ENCODE measurements at regions of chr2 and their contacts with region 1.

Region 1: GRCh38 chr2:159879051-159879604 is 81.1 kb upstream of the CD302 start:
- DNase-seq: no peak
- H3K4me3 ChIP-seq: no peak overlapping the region
- H3K27ac ChIP-seq: no peak overlapping the region
- H3K4me1 ChIP-seq: no peaks in the 10 kb centered on the region
- CTCF ChIP-seq: no peak

Region 2: GRCh38 chr2:159807183-159808031 is 71.7 kb before region 1 on chr2:
- CTCF ChIA-PET with region 1: no interaction called
- POLR2A ChIA-PET with region 1: no interaction called
- intact Hi-C with region 1: no loop called
- DNase-seq: peak; percentile 47
- H3K4me3 ChIP-seq: no peak overlapping the region
- H3K27ac ChIP-seq: no peak overlapping the region
- H3K4me1 ChIP-seq: no peaks in the 10 kb centered on the region
- CTCF ChIP-seq: peak; percentile 89

Region 3: GRCh38 chr2:160028431-160029269 is 149.5 kb after region 1 on chr2:
- CTCF ChIA-PET with region 1: no interaction called
- POLR2A ChIA-PET with region 1: interaction called, 12 read pairs
- intact Hi-C with region 1: no loop called
- DNase-seq: no peak
- H3K4me3 ChIP-seq: no peak overlapping the region
- H3K27ac ChIP-seq: no peak overlapping the region
- H3K4me1 ChIP-seq: no peaks in the 10 kb centered on the region
- CTCF ChIP-seq: no peak

Measured in OCI-LY7 (cell line).